ENCODE measurements at regions of chr14 and their contacts with region 1.

Region 1: DNA sequence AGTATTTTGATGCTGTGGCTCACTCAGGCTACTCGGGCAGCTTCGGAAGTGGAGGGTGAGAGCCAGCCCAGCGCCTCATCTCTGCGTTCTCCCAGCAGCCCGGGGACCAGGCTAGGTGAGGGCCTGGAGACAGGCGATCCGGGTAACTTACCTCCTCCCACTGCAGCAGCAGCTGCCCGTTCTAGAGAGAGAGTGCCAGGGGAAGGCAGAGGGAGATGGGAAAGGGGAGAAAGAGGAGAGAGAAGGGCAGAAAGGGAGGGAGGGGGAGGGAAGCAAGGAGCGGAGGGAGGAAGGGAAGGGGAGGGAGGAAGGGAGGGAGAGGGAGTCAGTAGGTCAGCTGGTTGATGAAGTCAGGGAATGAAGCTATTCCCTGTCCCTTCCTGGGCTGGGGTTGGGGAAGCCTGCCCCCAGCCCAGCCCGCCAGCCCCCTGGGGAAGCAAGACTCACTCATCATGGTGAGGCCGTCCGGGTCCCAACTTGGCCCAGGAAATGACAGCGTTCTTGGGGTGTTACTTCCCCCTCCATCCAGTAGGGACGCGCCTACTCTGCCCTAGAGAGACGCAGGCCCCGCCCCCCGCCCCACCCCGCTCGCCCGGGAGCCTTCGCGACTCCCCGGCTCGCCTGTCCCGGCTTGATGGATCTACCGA is at the start of gene IFI27L2:
- DNase-seq: peak; percentile 85
- H3K4me3 Mint-ChIP-seq: peak within 1 kb of the TSS; percentile 85
- H3K27ac Mint-ChIP-seq: peak within 1 kb of the TSS; percentile 76
- H3K4me1 Mint-ChIP-seq: peaks cover 12% of the 10 kb centered on the region
- H3K27me3 Mint-ChIP-seq: no peaks in the 10 kb centered on the region
- total RNA-seq, gene IFI27L2: 69.3 to 74.4 TPM

Region 2: DNA sequence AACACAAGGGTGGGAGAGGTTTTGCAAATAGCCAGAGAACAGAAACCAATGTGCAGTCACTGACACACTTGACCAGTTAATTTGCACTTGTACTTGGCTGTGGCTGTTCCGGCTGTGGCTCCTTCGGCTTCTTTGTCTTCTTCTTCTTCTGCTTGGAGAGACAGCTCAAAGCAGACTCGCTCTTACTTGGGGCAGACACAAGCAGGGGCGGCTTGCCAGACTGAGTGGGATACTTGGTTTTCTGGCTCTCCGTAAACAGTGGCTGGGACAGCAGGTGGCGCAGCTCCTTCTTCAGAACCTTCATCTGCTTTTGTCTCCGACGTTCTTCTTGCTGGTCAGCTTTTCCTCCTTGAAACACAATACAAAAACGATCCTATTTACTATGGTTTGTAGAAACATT is 78.1 kb before region 1 on chr14:
- CTCF ChIA-PET with region 1: interaction called, 12 read pairs
- POLR2A ChIA-PET with region 1: no interaction called
- intact Hi-C with region 1: no loop called
- DNase-seq: peak; percentile 14
- H3K4me3 Mint-ChIP-seq: no peak overlapping the region
- H3K27ac Mint-ChIP-seq: peak overlapping the region; percentile 23
- H3K4me1 Mint-ChIP-seq: peaks cover 23% of the 10 kb centered on the region
- H3K27me3 Mint-ChIP-seq: no peaks in the 10 kb centered on the region

Region 3: DNA sequence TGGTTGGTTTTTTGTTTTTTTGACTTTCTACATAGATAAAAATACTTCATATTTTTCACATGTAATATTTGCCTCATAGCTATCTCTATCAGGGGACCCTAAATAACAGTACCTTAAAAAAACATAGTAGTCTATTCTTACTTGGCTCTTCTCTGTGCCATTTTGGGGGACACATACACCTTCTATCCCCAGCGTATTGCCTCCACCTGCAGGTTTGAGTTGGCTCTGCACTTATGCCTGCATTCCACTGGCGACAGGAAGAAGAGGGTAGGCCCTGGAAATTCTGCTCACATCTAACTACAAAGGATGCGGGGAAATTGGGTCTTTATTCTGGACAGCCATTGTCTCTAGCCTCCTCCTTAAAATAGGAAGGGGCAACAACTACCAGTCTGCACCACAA is 14.0 kb after region 1 on chr14:
- CTCF ChIA-PET with region 1: interaction called, 32 read pairs
- POLR2A ChIA-PET with region 1: no interaction called
- intact Hi-C with region 1: no loop called
- DNase-seq: peak; percentile 31
- H3K4me3 Mint-ChIP-seq: no peak overlapping the region
- H3K27ac Mint-ChIP-seq: no peak overlapping the region
- H3K4me1 Mint-ChIP-seq: peaks cover 18% of the 10 kb centered on the region
- H3K27me3 Mint-ChIP-seq: no peaks in the 10 kb centered on the region

Region 4: GRCh38 chr14:94180655-94181271 is 51.5 kb after region 1 on chr14:
- CTCF ChIA-PET with region 1: interaction called, 42 read pairs
- POLR2A ChIA-PET with region 1: no interaction called
- intact Hi-C with region 1: loop called (anchors 1 kb)
- DNase-seq: no peak
- H3K4me3 Mint-ChIP-seq: peak overlapping the region; percentile 54
- H3K27ac Mint-ChIP-seq: peak overlapping the region; percentile 67
- H3K4me1 Mint-ChIP-seq: peaks cover 50% of the 10 kb centered on the region
- H3K27me3 Mint-ChIP-seq: no peaks in the 10 kb centered on the region

Region 5: DNA sequence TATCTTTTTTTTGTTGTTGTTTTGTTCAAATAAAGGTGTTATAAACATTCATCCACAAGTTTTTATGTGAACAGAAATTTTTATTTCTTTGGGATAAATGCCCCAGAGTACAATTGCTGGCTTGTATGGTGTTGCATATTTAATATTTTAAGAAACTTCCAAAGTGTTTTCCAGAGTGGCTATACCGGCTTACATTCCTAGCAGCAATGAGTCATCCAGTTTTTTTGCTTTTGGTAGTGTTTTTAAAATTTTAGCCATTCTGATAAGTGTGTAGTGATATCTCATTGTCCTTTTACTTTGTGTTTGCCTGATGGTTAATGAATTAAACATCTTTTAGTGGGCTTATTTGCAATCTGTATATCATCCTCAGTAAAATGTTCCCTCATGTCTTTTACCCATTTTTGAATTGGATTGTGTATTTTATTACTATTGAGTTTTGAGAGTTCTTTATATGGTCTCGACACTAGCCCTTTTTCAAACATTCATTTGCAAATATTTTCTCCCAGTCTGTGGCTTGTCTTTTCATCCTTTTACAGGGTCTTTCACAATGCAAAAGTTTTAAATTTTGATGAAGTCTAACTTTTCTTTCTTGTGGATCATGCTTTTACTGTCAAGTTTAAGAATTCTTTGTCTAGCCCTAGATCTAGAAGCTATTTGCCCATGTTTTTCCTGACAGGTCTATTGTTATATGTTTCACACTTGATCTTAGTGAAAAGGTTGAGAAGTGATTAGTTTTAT is 74.4 kb after region 1 on chr14:
- CTCF ChIA-PET with region 1: no interaction called
- POLR2A ChIA-PET with region 1: no interaction called
- intact Hi-C with region 1: no loop called
- DNase-seq: no peak
- H3K4me3 Mint-ChIP-seq: no peak overlapping the region
- H3K27ac Mint-ChIP-seq: no peak overlapping the region
- H3K4me1 Mint-ChIP-seq: peaks cover 4% of the 10 kb centered on the region
- H3K27me3 Mint-ChIP-seq: no peaks in the 10 kb centered on the region

Region 6: GRCh38 chr14:94548999-94549985 is 420.1 kb after region 1 on chr14:
- CTCF ChIA-PET with region 1: interaction called, 15 read pairs
- POLR2A ChIA-PET with region 1: no interaction called
- intact Hi-C with region 1: loop called (anchors 1 kb)
- DNase-seq: peak; percentile 74
- H3K4me3 Mint-ChIP-seq: no peak overlapping the region
- H3K27ac Mint-ChIP-seq: no peak overlapping the region
- H3K4me1 Mint-ChIP-seq: no peaks in the 10 kb centered on the region
- H3K27me3 Mint-ChIP-seq: peaks cover 18% of the 10 kb centered on the region